ENCODE measurements at regions of chr11 and their contacts with region 1.

Region 1: DNA sequence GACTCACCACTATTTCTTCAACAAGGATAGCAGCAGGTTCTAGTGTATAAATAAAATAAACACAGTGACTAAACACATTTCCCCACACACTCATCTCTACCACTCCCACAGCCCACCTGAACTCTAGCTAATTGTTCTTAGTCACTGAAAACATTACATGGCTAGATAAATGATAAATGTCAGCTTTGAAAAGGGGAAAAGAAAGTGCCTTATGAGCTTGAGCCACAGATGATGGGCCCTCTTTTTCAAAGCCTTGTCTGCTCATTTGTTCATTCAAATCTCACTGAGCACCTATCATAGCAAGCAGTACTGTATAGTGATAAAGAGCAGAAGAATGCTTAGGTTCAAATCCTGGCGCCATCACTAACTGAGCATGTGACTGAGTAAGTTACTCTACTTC is 58.3 kb downstream of the SIK3 start:
- DNase-seq: no peak
- H3K4me3 ChIP-seq: no peak overlapping the region
- CTCF ChIP-seq: no peak

Region 2: GRCh38 chr11:117002639-117003299 is 37.1 kb before region 1 on chr11:
- in situ Hi-C with region 1: loop called (anchors 5 kb)
- DNase-seq: no peak
- H3K4me3 ChIP-seq: no peak overlapping the region
- CTCF ChIP-seq: no peak

Region 3: GRCh38 chr11:117089685-117090084 is 49.8 kb after region 1 on chr11:
- in situ Hi-C with region 1: loop called (anchors 5 kb)
- DNase-seq: no peak
- H3K4me3 ChIP-seq: no peak overlapping the region
- CTCF ChIP-seq: no peak